ENCODE measurements at regions of chr1 and their contacts with region 1.

Region 1: GRCh38 chr1:112390775-112391602 is 5.0 kb upstream of the CTTNBP2NL start:
- DNase-seq: peak; percentile 90
- ATAC-seq: peak; percentile 92
- H3K4me3 ChIP-seq: peak overlapping the region in 1 of 5 experiments; percentile 17
- H3K4me3 Mint-ChIP-seq: peak overlapping the region; percentile 13
- H3K27ac ChIP-seq: no peak overlapping the region
- H3K27ac Mint-ChIP-seq: peak overlapping the region; percentile 15
- H3K4me1 ChIP-seq: peaks cover 17 to 21% of the 10 kb centered on the region in 2 donors
- H3K4me1 Mint-ChIP-seq: peaks cover 24% of the 10 kb centered on the region
- H3K27me3 ChIP-seq: peaks cover 0 to 12% (median 0%) of the 10 kb centered on the region in 4 experiments
- H3K27me3 Mint-ChIP-seq: peaks cover 13% of the 10 kb centered on the region
- CTCF ChIP-seq: peak; percentile 96

Region 2: DNA sequence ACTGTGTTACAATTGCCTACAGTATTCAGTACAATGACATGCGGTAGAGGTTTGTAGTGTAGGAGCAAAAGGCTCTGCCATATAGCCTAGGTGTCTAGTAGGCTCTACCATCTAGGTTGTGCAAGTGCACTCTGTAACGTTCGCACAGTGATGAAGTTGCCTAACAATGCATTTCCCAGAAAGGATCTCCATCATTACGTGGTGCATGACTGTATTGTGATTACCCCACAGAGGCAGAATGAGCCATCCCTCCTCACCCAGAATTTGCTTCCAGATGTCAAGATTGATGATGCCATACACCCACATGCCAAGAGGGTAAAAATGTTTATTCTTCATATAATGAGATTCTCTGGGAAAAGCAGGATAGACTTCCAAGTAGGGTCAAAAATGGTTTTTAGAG is 194.3 kb before region 1 on chr1:
- CTCF ChIA-PET with region 1: no interaction called
- POLR2A ChIA-PET with region 1: no interaction called
- intact Hi-C with region 1: no loop called
- DNase-seq: no peak
- ATAC-seq: no peak
- H3K4me3 ChIP-seq: no peak overlapping the region
- H3K4me3 Mint-ChIP-seq: no peak overlapping the region
- H3K27ac ChIP-seq: no peak overlapping the region
- H3K27ac Mint-ChIP-seq: no peak overlapping the region
- H3K4me1 ChIP-seq: no peaks in the 10 kb centered on the region
- H3K4me1 Mint-ChIP-seq: no peaks in the 10 kb centered on the region
- H3K27me3 ChIP-seq: no peaks in the 10 kb centered on the region
- H3K27me3 Mint-ChIP-seq: no peaks in the 10 kb centered on the region
- CTCF ChIP-seq: no peak

Region 3: GRCh38 chr1:112466078-112466660 is 75.2 kb after region 1 on chr1:
- CTCF ChIA-PET with region 1: interaction called, 63 read pairs
- POLR2A ChIA-PET with region 1: interaction called, 7 read pairs
- intact Hi-C with region 1: loop called (anchors 1 kb)
- DNase-seq: peak; percentile 94
- ATAC-seq: peak; percentile 97
- H3K4me3 ChIP-seq: peak overlapping the region; percentile 5 to 51 (median 50)
- H3K4me3 Mint-ChIP-seq: peak overlapping the region; percentile 83
- H3K27ac ChIP-seq: peak overlapping the region; percentile 74 to 75
- H3K27ac Mint-ChIP-seq: peak overlapping the region; percentile 83
- H3K4me1 ChIP-seq: peaks cover 27 to 40% of the 10 kb centered on the region in 2 donors
- H3K4me1 Mint-ChIP-seq: peaks cover 46% of the 10 kb centered on the region
- H3K27me3 ChIP-seq: peaks cover 0 to 21% (median 12%) of the 10 kb centered on the region in 4 experiments
- H3K27me3 Mint-ChIP-seq: peaks cover 19% of the 10 kb centered on the region
- CTCF ChIP-seq: peak; percentile 75

Region 4: DNA sequence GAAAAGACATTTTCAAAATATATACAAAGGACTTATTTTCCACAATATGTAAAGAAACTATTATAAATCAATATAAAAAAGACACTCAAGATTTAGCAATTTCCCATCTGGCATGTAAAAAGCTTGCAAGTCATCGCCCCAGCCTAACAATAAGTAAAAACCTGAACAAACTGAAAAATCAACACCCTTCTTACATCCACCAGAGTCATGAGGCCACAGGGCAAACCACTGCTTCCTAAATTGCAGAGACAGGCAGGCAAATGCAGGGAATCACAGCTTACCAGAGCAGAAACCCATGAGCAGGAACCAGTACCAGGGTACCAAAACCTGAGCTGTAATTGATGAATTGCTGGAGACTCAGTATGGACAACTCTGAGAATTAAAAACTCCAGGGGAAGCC is 101.1 kb after region 1 on chr1:
- CTCF ChIA-PET with region 1: no interaction called
- POLR2A ChIA-PET with region 1: no interaction called
- intact Hi-C with region 1: no loop called
- DNase-seq: no peak
- ATAC-seq: no peak
- H3K4me3 ChIP-seq: no peak overlapping the region
- H3K4me3 Mint-ChIP-seq: no peak overlapping the region
- H3K27ac ChIP-seq: no peak overlapping the region
- H3K27ac Mint-ChIP-seq: no peak overlapping the region
- H3K4me1 ChIP-seq: no peaks in the 10 kb centered on the region
- H3K4me1 Mint-ChIP-seq: no peaks in the 10 kb centered on the region
- H3K27me3 ChIP-seq: no peaks in the 10 kb centered on the region
- H3K27me3 Mint-ChIP-seq: peaks cover 38% of the 10 kb centered on the region
- CTCF ChIP-seq: no peak

Region 5: DNA sequence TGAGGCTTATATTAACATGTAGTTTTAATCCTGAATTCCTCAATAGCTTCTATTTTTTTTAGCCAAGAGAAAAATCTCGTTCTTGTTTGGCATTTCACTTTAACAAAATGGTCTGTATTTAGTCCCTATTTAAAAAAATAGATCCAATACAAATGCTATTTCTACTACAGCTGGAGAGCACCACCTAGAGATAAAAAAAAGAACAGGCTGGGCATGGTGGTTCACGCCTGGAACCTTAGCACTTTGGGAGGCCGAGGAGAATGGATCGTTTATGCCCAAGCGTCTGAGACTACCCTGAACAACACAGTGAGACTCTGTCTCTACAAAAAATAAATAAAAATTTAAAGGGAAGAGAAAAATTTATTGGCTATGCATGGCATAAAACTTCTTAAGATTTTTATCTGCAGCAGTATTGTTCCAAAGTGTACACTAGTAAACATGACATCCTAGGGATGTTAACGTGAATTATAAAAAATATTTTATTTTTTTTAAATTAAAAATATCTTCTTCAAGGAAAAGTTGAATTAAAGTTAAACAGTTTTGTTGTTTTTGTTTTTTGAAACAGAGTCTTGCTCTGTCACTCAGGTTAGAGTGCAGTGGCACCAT is 223.6 kb after region 1 on chr1:
- CTCF ChIA-PET with region 1: interaction called, 87 read pairs
- POLR2A ChIA-PET with region 1: no interaction called
- intact Hi-C with region 1: loop called (anchors 1 kb)
- DNase-seq: peak; percentile 46
- ATAC-seq: no peak
- H3K4me3 ChIP-seq: no peak overlapping the region
- H3K4me3 Mint-ChIP-seq: no peak overlapping the region
- H3K27ac ChIP-seq: no peak overlapping the region
- H3K27ac Mint-ChIP-seq: no peak overlapping the region
- H3K4me1 ChIP-seq: peaks cover 5 to 9% of the 10 kb centered on the region in 2 donors
- H3K4me1 Mint-ChIP-seq: peaks cover 12% of the 10 kb centered on the region
- H3K27me3 ChIP-seq: no peaks in the 10 kb centered on the region
- H3K27me3 Mint-ChIP-seq: no peaks in the 10 kb centered on the region
- CTCF ChIP-seq: peak; percentile 64

Region 6: DNA sequence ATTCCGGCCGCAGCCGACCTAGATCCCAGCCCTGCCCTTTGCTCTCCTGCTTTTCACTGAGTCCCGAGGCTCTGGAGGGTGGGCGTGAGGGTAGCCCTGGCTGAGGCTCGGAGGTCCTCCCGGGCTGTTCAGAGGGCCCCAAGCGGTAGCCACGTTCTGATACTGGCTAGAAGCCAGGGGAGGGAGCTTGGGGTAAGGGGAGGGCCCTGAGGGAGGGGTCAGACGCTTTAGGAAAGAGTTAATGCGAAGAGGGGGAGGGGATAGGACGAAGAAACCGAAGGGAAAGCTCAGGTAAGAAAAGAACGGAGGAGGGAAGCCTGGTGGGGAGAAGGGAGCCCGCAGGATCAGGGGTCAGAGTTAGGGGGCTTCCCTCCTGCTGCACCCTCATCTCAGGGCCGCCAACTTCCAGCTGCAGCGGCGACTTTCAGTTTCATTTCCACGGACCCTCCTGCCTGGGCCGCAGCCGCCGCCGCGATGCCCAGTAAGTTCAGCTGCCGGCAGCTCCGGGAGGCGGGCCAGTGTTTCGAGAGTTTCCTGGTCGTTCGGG is 283.5 kb after region 1 on chr1 and contains the start of gene MOV10:
- CTCF ChIA-PET with region 1: interaction called, 29 read pairs
- POLR2A ChIA-PET with region 1: no interaction called
- intact Hi-C with region 1: loop called (anchors 10 kb)
- DNase-seq: peak; percentile 76
- ATAC-seq: peak; percentile 63
- H3K4me3 ChIP-seq: peak within 1 kb of the TSS; percentile 42 to 86 (median 80)
- H3K4me3 Mint-ChIP-seq: peak within 1 kb of the TSS; percentile 94
- H3K27ac ChIP-seq: peak within 1 kb of the TSS; percentile 26 to 76
- H3K27ac Mint-ChIP-seq: peak within 1 kb of the TSS; percentile 92
- H3K4me1 ChIP-seq: peaks cover 25 to 30% of the 10 kb centered on the region in 2 donors
- H3K4me1 Mint-ChIP-seq: peaks cover 30% of the 10 kb centered on the region
- H3K27me3 ChIP-seq: no peaks in the 10 kb centered on the region
- H3K27me3 Mint-ChIP-seq: no peaks in the 10 kb centered on the region
- CTCF ChIP-seq: no peak
- total RNA-seq, gene MOV10: 46.2 and 51.2 TPM in 2 replicates

Region 7: GRCh38 chr1:112803906-112804762 is 413.1 kb after region 1 on chr1:
- CTCF ChIA-PET with region 1: interaction called, 15 read pairs
- POLR2A ChIA-PET with region 1: no interaction called
- intact Hi-C with region 1: loop called (anchors 2 kb)
- DNase-seq: peak; percentile 58
- ATAC-seq: peak; percentile 79
- H3K4me3 ChIP-seq: no peak overlapping the region
- H3K4me3 Mint-ChIP-seq: no peak overlapping the region
- H3K27ac ChIP-seq: no peak overlapping the region
- H3K27ac Mint-ChIP-seq: no peak overlapping the region
- H3K4me1 ChIP-seq: no peaks in the 10 kb centered on the region
- H3K4me1 Mint-ChIP-seq: no peaks in the 10 kb centered on the region
- H3K27me3 ChIP-seq: no peaks in the 10 kb centered on the region
- H3K27me3 Mint-ChIP-seq: peaks cover 32% of the 10 kb centered on the region
- CTCF ChIP-seq: peak; percentile 53

Region 8: DNA sequence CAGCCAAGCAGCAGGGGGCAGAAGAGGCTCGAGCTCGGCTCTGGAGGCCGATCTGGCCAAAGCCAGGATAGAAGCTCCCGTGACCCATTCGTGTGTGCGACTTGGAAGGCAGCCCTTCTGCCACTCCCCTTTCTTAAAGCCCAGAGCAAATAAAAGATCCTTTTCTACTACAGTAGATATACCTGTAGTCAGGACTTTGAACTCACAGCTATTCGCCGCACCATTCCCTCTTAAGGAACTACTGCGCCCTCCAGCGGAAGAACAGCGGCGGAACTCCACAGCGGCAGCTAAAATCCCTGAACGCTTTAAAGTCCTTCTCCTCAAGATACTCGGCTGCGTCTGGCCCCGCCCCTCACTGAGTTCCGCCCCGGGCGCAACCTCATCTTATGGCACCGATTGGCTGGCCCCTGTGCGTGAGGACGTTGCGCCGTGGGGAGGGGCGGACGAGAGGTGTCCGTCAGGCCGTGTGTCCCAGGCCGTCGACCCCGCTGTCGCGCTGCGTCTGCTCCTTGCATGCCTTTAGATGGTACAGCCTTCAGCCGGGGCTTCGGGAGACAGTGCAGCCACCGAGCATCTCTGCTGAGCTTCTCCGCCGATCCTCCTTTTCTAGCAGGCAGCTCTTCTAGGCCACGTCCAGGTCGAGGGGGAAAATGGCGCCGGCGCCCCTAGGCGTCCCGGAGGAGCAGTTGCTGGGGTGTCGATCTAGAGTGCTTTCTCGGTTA is 681.9 kb after region 1 on chr1 and contains the start of gene LRIG2:
- CTCF ChIA-PET with region 1: interaction called, 6 read pairs
- POLR2A ChIA-PET with region 1: interaction called, 10 read pairs
- intact Hi-C with region 1: loop called (anchors 2 kb)
- DNase-seq: peak; percentile 97
- ATAC-seq: peak; percentile 96
- H3K4me3 ChIP-seq: peak within 1 kb of the TSS; percentile 74 to 94 (median 87)
- H3K4me3 Mint-ChIP-seq: peak within 1 kb of the TSS; percentile 99
- H3K27ac ChIP-seq: peak within 1 kb of the TSS; percentile 74 to 77
- H3K27ac Mint-ChIP-seq: peak within 1 kb of the TSS; percentile 97
- H3K4me1 ChIP-seq: peaks cover 15 to 18% of the 10 kb centered on the region in 2 donors
- H3K4me1 Mint-ChIP-seq: peaks cover 33% of the 10 kb centered on the region
- H3K27me3 ChIP-seq: no peaks in the 10 kb centered on the region
- H3K27me3 Mint-ChIP-seq: no peaks in the 10 kb centered on the region
- CTCF ChIP-seq: peak; percentile 95
- total RNA-seq, gene LRIG2: 30.6 and 32.2 TPM in 2 replicates